PC-9 (cell line): ENCODE measurements at regions of chr2 and their contacts with region 1.

Region 1: DNA sequence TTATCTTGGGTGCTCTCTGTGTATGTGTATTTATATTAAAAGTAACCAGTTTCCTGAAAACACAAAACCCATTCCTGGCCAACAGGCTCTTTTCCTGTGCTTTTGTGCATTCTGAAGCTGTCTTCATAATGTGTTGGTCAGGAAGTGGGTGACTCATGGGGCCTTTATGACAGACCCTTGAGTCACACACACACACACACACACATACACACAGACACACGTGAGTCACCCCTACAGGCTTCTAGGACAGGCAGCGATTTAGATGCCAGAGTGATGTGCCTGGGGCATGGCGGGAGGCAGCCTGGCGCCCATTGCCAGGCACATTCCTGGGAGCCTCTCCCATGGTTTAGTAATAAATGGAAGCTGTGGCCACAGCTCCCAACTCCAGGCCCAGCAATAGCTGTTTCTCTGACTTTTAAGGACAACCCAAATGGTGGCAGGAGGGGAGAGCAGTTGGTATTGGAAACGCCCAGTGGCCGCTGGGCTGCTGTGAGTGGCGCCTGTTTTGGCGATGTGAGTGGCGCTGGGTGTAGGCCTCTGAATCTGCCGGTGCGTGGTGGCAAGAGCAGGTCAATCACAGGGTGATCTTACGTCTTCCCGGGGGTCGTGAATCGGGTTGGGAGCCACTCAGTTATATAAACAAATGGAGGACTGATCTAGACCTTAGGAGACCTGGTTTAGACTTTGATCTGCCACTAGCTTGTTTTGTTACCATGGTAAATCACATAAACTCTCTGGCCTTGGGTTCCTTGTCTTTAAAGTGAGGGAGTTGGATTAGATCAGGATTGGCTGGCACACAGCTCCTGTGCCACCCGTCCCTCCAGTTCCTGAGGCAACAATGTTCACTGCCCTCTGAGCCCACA is 150.7 kb upstream of the DLX2 start:
- DNase-seq: peak; percentile 99 to 100
- H3K4me3 ChIP-seq: no peak overlapping the region
- H3K27ac ChIP-seq: peak overlapping the region; percentile 65
- H3K4me1 ChIP-seq: peaks cover 62% of the 10 kb centered on the region
- H3K27me3 ChIP-seq: no peaks in the 10 kb centered on the region
- CTCF ChIP-seq: no peak

Region 2: DNA sequence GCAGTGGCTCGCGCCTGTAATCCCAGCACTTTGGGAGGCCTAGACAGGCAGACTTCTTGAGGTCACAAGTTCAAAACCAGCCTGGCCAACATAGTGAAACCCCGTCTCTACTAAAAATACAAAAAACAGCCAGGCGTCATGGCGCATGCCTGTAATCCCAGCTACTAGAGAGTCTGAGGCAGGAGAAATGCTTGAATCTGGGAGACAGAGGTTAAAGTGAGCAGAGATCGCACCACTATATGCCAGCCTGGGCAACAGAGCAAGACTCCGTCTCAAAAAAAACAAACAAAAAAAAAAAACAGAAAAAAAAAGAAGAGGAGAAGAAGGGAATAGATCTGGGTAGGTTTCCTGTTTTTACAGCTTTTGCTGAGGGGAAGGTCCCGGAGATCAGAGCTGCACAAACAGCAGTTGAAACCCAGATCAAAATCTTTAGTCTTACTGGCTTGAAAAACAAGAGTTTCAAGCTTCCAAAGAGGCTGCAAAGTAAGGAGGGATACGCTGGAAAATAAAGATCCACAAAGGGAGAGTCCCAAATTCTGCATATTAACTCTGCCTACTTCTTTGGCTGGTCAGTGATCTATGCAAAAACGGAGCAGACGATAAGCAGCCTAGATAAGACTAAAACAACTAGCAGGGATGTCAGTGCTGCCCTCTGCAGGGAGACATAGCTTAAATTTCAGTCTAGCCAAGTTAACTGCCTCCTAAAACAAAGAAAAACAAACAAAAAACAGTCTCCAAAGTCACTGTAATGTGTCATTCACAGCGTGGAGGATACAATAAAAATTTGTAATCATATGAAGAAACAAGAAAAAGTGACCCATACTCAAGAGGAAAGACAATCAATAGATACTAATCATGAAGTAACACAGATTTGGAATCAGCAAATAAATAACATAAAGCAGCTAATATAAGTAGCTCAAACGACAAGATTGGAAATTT is 1166.8 kb before region 1 on chr2:
- CTCF ChIA-PET with region 1: interaction called, 13 read pairs
- POLR2A ChIA-PET with region 1: interaction called, 3 read pairs
- intact Hi-C with region 1: no loop called
- DNase-seq: peak; percentile 52 to 59
- H3K4me3 ChIP-seq: no peak overlapping the region
- H3K27ac ChIP-seq: no peak overlapping the region
- H3K4me1 ChIP-seq: no peaks in the 10 kb centered on the region
- H3K27me3 ChIP-seq: no peaks in the 10 kb centered on the region
- CTCF ChIP-seq: peak; percentile 84

Region 3: GRCh38 chr2:172095146-172095904 is 158.1 kb before region 1 on chr2:
- CTCF ChIA-PET with region 1: interaction called, 4 read pairs
- POLR2A ChIA-PET with region 1: no interaction called
- intact Hi-C with region 1: loop called (anchors 1 kb)
- DNase-seq: peak; percentile 88 to 94
- H3K4me3 ChIP-seq: peak overlapping the region; percentile 73
- H3K27ac ChIP-seq: peak overlapping the region; percentile 12
- H3K4me1 ChIP-seq: peaks cover 45% of the 10 kb centered on the region
- H3K27me3 ChIP-seq: no peaks in the 10 kb centered on the region
- CTCF ChIP-seq: no peak

Region 4: GRCh38 chr2:172200495-172201085 is 52.8 kb before region 1 on chr2:
- CTCF ChIA-PET with region 1: no interaction called
- POLR2A ChIA-PET with region 1: no interaction called
- intact Hi-C with region 1: loop called (anchors 1 kb)
- DNase-seq: no peak
- H3K4me3 ChIP-seq: no peak overlapping the region
- H3K27ac ChIP-seq: no peak overlapping the region
- H3K4me1 ChIP-seq: peaks cover 8% of the 10 kb centered on the region
- H3K27me3 ChIP-seq: no peaks in the 10 kb centered on the region
- CTCF ChIP-seq: peak; percentile 84

Region 5: GRCh38 chr2:172234716-172235691 is 18.4 kb before region 1 on chr2:
- CTCF ChIA-PET with region 1: interaction called, 9 read pairs
- POLR2A ChIA-PET with region 1: interaction called, 5 read pairs
- intact Hi-C with region 1: loop called (anchors 1 kb)
- DNase-seq: no peak
- H3K4me3 ChIP-seq: no peak overlapping the region
- H3K27ac ChIP-seq: no peak overlapping the region
- H3K4me1 ChIP-seq: peaks cover 30% of the 10 kb centered on the region
- H3K27me3 ChIP-seq: no peaks in the 10 kb centered on the region
- CTCF ChIP-seq: no peak

Region 6: GRCh38 chr2:172427256-172427989 is 174.0 kb after region 1 on chr2 and contains the start of gene ITGA6:
- CTCF ChIA-PET with region 1: interaction called, 6 read pairs
- POLR2A ChIA-PET with region 1: interaction called, 23 read pairs
- intact Hi-C with region 1: loop called (anchors 1 kb)
- DNase-seq: peak; percentile 87 to 96
- H3K4me3 ChIP-seq: peak within 1 kb of the TSS; percentile 57
- H3K27ac ChIP-seq: peak within 1 kb of the TSS; percentile 52
- H3K4me1 ChIP-seq: peaks cover 45% of the 10 kb centered on the region
- H3K27me3 ChIP-seq: no peaks in the 10 kb centered on the region
- CTCF ChIP-seq: peak; percentile 43; the same call in 1 of the 2 replicates
- total RNA-seq, gene ITGA6: 180 and 213 TPM in 2 replicates

Region 7: GRCh38 chr2:172456002-172456401 is 202.6 kb after region 1 on chr2:
- CTCF ChIA-PET with region 1: interaction called, 21 read pairs
- POLR2A ChIA-PET with region 1: no interaction called
- intact Hi-C with region 1: loop called (anchors 2 kb)
- DNase-seq: peak; percentile 63 to 71
- H3K4me3 ChIP-seq: no peak overlapping the region
- H3K27ac ChIP-seq: peak overlapping the region; percentile 67
- H3K4me1 ChIP-seq: peaks cover 73% of the 10 kb centered on the region
- H3K27me3 ChIP-seq: no peaks in the 10 kb centered on the region
- CTCF ChIP-seq: no peak